Mammary epithelial cell (primary cell): ENCODE measurements at regions of chr7 and their contacts with region 1.

Region 1: GRCh38 chr7:82810558-82811259 is 352.0 kb downstream of the PCLO start:
- DNase-seq: peak; percentile 30
- H3K4me3 ChIP-seq: no peak overlapping the region
- H3K27ac ChIP-seq: no peak overlapping the region
- H3K4me1 ChIP-seq: peaks cover 1% of the 10 kb centered on the region
- H3K27me3 ChIP-seq: no peaks in the 10 kb centered on the region
- CTCF ChIP-seq: peak; percentile 71 to 76

Region 2: GRCh38 chr7:82740246-82740848 is 70.4 kb before region 1 on chr7:
- CTCF ChIA-PET with region 1: no interaction called
- dilution Hi-C with region 1: no loop called
- in situ Hi-C with region 1: no loop called
- intact Hi-C with region 1: no loop called
- DNase-seq: peak; percentile 40
- H3K4me3 ChIP-seq: no peak overlapping the region
- H3K27ac ChIP-seq: no peak overlapping the region
- H3K4me1 ChIP-seq: no peaks in the 10 kb centered on the region
- H3K27me3 ChIP-seq: no peaks in the 10 kb centered on the region
- CTCF ChIP-seq: peak; percentile 77 to 82

Region 3: DNA sequence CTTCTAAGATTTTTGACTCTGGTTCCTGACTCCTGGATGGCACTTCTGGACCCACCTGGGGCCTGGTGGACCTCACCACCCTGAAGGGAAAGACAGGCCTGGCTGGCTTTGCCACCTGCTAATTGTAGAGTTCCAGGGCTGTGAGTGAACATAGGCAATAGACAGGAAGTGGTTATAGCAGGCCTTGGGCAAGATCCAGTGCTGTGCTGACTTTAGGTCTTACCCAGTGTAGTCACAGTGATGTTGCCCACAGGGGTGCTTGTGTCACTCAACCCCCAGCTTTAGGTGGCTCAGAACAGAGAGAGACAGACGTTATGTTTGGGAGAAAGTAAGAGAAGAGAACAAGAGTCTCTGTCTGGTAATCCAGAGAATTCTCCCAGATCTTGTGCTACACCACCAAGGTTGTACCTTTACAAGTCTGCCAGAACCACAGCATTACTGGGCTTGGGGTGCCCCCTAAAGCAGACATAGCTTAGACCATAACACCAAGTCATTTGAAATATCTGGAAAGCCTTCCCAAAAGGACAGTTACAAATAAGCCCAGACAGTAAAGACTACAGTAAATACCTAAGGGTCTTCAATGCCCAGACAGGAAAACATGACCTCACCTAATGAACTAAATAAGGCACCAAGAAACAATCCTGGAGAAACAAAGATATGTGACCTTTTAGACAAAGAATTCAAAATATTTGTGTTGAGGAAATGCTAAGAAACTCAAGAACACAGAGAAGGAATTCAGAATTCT is 48.6 kb after region 1 on chr7:
- CTCF ChIA-PET with region 1: no interaction called
- dilution Hi-C with region 1: no loop called
- in situ Hi-C with region 1: no loop called
- intact Hi-C with region 1: no loop called
- DNase-seq: peak; percentile 16
- H3K4me3 ChIP-seq: no peak overlapping the region
- H3K27ac ChIP-seq: no peak overlapping the region
- H3K4me1 ChIP-seq: no peaks in the 10 kb centered on the region
- H3K27me3 ChIP-seq: no peaks in the 10 kb centered on the region
- CTCF ChIP-seq: no peak

Region 4: GRCh38 chr7:83271212-83272099 is 460.7 kb after region 1 on chr7:
- CTCF ChIA-PET with region 1: no interaction called
- dilution Hi-C with region 1: no loop called
- in situ Hi-C with region 1: loop called in 1 of 2 experiments (anchors 25 kb)
- intact Hi-C with region 1: loop called (anchors 1 kb)
- DNase-seq: peak; percentile 22
- H3K4me3 ChIP-seq: no peak overlapping the region
- H3K27ac ChIP-seq: no peak overlapping the region
- H3K4me1 ChIP-seq: no peaks in the 10 kb centered on the region
- H3K27me3 ChIP-seq: no peaks in the 10 kb centered on the region
- CTCF ChIP-seq: peak; percentile 48 to 74